PC-9 (cell line): ENCODE measurements at regions of chr6 and their contacts with region 1.

Region 1: GRCh38 chr6:72689107-72689954 is 67.5 kb downstream of the KCNQ5 start:
- DNase-seq: no peak
- H3K4me3 ChIP-seq: no peak overlapping the region
- H3K27ac ChIP-seq: no peak overlapping the region
- H3K4me1 ChIP-seq: no peaks in the 10 kb centered on the region
- H3K27me3 ChIP-seq: no peaks in the 10 kb centered on the region
- CTCF ChIP-seq: no peak

Region 2: GRCh38 chr6:72440611-72441010 is 248.7 kb before region 1 on chr6:
- CTCF ChIA-PET with region 1: no interaction called
- POLR2A ChIA-PET with region 1: no interaction called
- intact Hi-C with region 1: no loop called
- DNase-seq: no peak
- H3K4me3 ChIP-seq: no peak overlapping the region
- H3K27ac ChIP-seq: no peak overlapping the region
- H3K4me1 ChIP-seq: no peaks in the 10 kb centered on the region
- H3K27me3 ChIP-seq: peaks cover 10% of the 10 kb centered on the region; the same call in 1 of the 2 replicates
- CTCF ChIP-seq: no peak

Region 3: GRCh38 chr6:73109659-73110058 is 420.3 kb after region 1 on chr6:
- CTCF ChIA-PET with region 1: no interaction called
- POLR2A ChIA-PET with region 1: interaction called, 15 read pairs
- intact Hi-C with region 1: no loop called
- DNase-seq: no peak
- H3K4me3 ChIP-seq: no peak overlapping the region
- H3K27ac ChIP-seq: no peak overlapping the region
- H3K4me1 ChIP-seq: no peaks in the 10 kb centered on the region
- H3K27me3 ChIP-seq: no peaks in the 10 kb centered on the region
- CTCF ChIP-seq: no peak